ENCODE measurements at regions of chr6 and their contacts with region 1.

Region 1: GRCh38 chr6:109187399-109188114 is 92.2 kb downstream of the CEP57L1 start:
- DNase-seq: peak; percentile 69
- H3K4me3 Mint-ChIP-seq: no peak overlapping the region
- H3K27ac Mint-ChIP-seq: no peak overlapping the region
- H3K4me1 Mint-ChIP-seq: peaks cover 2% of the 10 kb centered on the region
- H3K27me3 Mint-ChIP-seq: peaks cover 19% of the 10 kb centered on the region

Region 2: DNA sequence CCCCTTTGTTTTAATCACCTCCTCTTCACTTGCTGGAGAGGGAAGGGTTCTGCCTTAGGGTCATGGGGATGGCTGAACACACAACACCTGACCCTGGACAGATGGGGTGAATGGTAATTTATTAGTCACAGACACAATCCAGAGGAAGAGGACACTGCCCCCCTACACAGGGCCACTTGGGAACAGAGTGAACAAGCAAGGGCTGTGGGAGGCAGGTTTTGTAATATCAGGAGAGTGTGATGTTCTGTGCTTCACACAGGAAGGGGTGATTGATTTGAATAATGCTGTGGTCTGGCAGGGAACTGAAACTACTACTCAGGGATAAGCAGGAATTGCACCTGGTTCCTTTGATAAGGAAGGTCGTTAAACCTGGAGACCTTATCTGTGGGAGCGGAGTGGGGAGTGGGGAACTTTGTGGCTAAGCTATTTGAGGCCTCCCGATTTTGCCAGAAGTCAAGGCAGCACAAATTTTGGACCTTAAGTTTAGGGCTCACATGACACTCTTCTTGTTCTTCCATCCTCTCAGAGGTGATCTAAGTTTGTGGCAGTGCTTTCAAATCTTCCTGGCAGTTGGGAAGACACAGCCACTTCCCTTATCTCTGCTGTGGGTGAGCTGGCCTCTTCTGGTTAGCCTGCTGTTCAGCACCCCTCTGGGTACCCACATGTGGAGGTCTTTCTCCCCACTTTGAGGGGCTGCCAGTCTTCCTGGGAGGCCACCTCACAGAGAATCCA is 116.9 kb after region 1 on chr6:
- CTCF ChIA-PET with region 1: no interaction called
- POLR2A ChIA-PET with region 1: no interaction called
- intact Hi-C with region 1: no loop called
- DNase-seq: peak; percentile 46
- H3K4me3 Mint-ChIP-seq: no peak overlapping the region
- H3K27ac Mint-ChIP-seq: no peak overlapping the region
- H3K4me1 Mint-ChIP-seq: peaks cover 31% of the 10 kb centered on the region
- H3K27me3 Mint-ChIP-seq: peaks cover 4% of the 10 kb centered on the region

Region 3: DNA sequence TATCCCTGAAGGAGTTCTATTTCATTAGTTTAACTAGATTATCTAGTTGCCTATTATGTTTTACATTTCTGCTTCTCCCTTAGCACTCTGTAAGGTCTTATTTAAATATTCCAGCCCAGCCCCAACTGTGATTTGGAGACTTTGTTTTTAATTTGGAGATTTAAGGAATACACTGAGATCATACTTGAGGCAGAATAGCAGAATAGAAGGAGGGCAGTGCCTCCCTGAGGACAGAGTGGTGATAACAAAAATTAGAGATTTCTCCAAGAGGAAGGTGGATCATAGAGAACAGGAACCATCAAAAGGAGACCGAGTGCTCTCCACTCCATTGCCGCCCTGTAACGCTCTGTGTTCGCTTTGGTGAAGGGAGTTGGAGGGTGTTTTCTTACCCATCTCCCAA is 209.5 kb after region 1 on chr6:
- CTCF ChIA-PET with region 1: interaction called, 10 read pairs
- POLR2A ChIA-PET with region 1: no interaction called
- intact Hi-C with region 1: no loop called
- DNase-seq: no peak
- H3K4me3 Mint-ChIP-seq: no peak overlapping the region
- H3K27ac Mint-ChIP-seq: no peak overlapping the region
- H3K4me1 Mint-ChIP-seq: peaks cover 5% of the 10 kb centered on the region
- H3K27me3 Mint-ChIP-seq: no peaks in the 10 kb centered on the region

Region 4: DNA sequence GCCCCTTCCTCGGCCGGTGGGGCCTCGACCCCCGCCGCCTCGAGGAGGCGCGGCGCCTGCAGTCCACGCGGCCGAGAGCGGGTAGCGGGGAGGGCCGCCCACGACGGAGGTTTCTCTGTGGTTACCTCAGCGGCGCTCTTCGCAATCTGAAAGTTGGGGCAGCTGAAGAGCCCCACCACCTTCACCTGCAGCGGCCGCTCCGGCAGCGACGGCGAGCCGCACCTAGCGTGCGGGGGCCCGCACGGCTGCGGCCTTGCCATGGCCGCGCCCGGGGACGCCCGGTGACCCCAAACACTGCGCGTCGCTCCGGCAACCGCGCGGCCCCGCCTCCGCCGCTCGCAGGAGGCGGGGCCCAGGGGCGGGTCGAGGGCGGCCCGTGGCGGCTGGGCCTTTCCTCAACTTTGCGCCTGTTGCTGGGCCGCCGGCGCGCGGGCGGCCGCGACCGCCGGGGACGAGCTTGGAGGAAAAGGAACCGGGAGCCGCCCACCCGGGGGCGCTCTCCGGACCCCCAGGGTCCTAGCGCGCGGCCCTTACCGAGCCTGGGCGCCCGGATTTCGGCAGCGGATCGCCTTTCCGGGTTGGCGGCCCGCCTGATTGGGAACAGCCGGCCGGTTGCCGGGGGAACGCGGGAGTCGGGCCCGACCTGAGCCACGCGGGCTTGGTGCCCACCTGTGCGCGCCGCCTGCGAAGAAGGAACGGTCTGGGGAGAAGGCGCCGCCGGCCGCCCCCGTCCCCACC is 252.9 kb after region 1 on chr6 and contains the starts of genes PPIL6 and SMPD2:
- CTCF ChIA-PET with region 1: interaction called, 3 read pairs
- POLR2A ChIA-PET with region 1: no interaction called
- intact Hi-C with region 1: loop called (anchors 5 kb)
- DNase-seq: peak; percentile 84
- H3K4me3 Mint-ChIP-seq: peak within 1 kb of the TSS; percentile 87
- H3K27ac Mint-ChIP-seq: peak within 1 kb of the TSS; percentile 82
- H3K4me1 Mint-ChIP-seq: peaks cover 21% of the 10 kb centered on the region
- H3K27me3 Mint-ChIP-seq: no peaks in the 10 kb centered on the region
- total RNA-seq, gene PPIL6: 0.43 to 0.46 TPM
- total RNA-seq, gene SMPD2: 9.7 TPM

Measured in activated CD4-positive, alpha-beta memory T cell treated with anti-CD3 and anti-CD28 coated beads for 36 hours (primary cell).